ENCODE measurements at regions of chr3 and their contacts with region 1.

Region 1: GRCh38 chr3:186882881-186883685 is 40.6 kb downstream of the ADIPOQ start:
- DNase-seq: peak; percentile 80
- H3K4me3 Mint-ChIP-seq: peak overlapping the region; percentile 59
- H3K27ac Mint-ChIP-seq: peak overlapping the region; percentile 90
- H3K4me1 Mint-ChIP-seq: peaks cover 63% of the 10 kb centered on the region
- H3K27me3 Mint-ChIP-seq: no peaks in the 10 kb centered on the region

Region 2: GRCh38 chr3:186570096-186570940 is 312.8 kb before region 1 on chr3 and contains the start of gene DNAJB11:
- CTCF ChIA-PET with region 1: no interaction called
- POLR2A ChIA-PET with region 1: no interaction called
- intact Hi-C with region 1: no loop called
- DNase-seq: peak; percentile 100
- H3K4me3 Mint-ChIP-seq: peak within 1 kb of the TSS; percentile 95
- H3K27ac Mint-ChIP-seq: peak within 1 kb of the TSS; percentile 91
- H3K4me1 Mint-ChIP-seq: peaks cover 49% of the 10 kb centered on the region
- H3K27me3 Mint-ChIP-seq: no peaks in the 10 kb centered on the region
- total RNA-seq, gene DNAJB11: 36.9 to 39.5 TPM

Region 3: DNA sequence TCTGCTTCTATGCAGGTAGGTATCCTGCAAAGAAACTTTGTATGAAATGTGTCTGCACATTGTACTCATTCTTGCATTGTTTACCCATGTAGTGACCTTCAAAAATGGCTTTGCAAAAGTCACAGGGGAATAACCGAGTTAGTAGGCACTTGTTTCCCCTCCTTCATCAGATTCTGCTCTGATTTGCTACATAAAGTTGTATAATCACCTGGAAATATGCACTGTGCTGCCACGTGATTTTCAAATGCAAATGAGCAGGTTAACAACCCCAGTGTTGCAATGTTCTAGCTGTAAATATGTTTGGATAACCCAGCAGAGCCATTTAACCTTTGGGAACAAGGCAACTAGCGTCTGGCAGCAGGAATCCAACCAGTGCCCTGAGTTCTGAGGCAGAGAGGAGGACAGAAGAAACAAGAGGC is 166.0 kb before region 1 on chr3 and contains the start of gene KNG1:
- CTCF ChIA-PET with region 1: no interaction called
- POLR2A ChIA-PET with region 1: no interaction called
- intact Hi-C with region 1: no loop called
- DNase-seq: no peak
- H3K4me3 Mint-ChIP-seq: no peak within 1 kb of the TSS
- H3K27ac Mint-ChIP-seq: no peak within 1 kb of the TSS
- H3K4me1 Mint-ChIP-seq: no peaks in the 10 kb centered on the region
- H3K27me3 Mint-ChIP-seq: peaks cover 3% of the 10 kb centered on the region
- total RNA-seq, gene KNG1: not detected

Region 4: DNA sequence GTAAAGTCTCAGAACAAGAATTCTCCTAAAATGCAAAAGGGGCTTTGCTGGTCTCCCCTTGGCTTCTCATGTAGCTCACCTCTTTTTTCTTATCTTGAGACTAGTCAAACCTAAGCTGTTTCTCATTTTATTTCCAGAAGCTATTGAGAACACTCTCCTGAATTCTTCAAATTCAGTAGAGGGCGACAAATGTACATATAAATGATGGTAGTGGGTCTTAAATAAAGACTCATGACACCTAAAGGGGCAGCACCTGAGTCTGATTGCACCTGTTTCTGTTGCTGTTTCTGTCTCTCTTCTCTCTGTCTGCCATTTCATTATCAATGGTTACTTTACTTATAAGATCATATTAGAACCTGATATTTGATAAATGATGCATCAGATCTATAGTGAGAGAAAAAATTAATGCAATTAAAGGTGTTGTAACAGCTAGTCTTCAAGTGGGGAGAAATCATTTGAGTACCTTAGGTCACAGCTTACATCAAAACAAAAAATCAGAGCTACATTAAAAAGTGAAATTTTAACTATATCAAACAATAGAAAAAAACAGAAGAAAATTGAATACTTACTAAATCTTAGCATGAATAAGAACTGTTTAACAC is 33.6 kb before region 1 on chr3:
- CTCF ChIA-PET with region 1: interaction called, 11 read pairs
- POLR2A ChIA-PET with region 1: interaction called, 4 read pairs
- intact Hi-C with region 1: loop called (anchors 1 kb)
- DNase-seq: peak; percentile 25
- H3K4me3 Mint-ChIP-seq: no peak overlapping the region
- H3K27ac Mint-ChIP-seq: no peak overlapping the region
- H3K4me1 Mint-ChIP-seq: peaks cover 18% of the 10 kb centered on the region
- H3K27me3 Mint-ChIP-seq: peaks cover 4% of the 10 kb centered on the region

Region 5: DNA sequence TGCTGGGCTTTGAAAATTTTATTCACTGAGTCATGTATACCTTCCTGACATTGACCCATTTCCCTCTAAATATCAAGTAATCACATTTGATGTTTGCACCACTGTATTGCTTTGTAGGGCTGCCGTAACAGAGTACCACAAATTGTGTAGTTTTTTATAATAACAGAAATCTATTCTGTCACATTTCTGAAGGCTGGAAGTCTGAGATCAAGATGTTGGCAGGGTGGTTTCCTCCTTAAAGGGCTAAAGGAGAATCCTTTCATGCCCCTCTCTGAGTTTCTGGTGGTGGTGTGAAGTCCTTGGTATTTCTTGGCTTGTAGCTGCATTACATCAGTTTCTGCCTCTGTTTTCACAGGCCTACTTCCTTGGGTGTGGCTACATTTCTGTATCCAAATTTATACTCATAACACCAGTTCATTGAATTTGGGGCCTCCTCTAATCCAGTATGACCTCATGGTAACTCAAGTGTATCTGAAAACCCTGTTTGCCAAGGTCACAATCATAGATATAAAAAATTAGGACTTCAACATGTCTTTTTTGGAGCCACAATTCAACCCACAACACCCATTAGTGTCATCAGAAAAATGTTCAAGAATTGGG is 18.2 kb after region 1 on chr3:
- CTCF ChIA-PET with region 1: no interaction called
- POLR2A ChIA-PET with region 1: no interaction called
- intact Hi-C with region 1: loop called (anchors 2 kb)
- DNase-seq: no peak
- H3K4me3 Mint-ChIP-seq: no peak overlapping the region
- H3K27ac Mint-ChIP-seq: peak overlapping the region; percentile 47
- H3K4me1 Mint-ChIP-seq: peaks cover 18% of the 10 kb centered on the region
- H3K27me3 Mint-ChIP-seq: no peaks in the 10 kb centered on the region

Region 6: GRCh38 chr3:186953011-186953487 is 70.0 kb after region 1 on chr3:
- CTCF ChIA-PET with region 1: no interaction called
- POLR2A ChIA-PET with region 1: interaction called, 6 read pairs
- intact Hi-C with region 1: loop called (anchors 1 kb)
- DNase-seq: peak; percentile 37
- H3K4me3 Mint-ChIP-seq: peak overlapping the region; percentile 21
- H3K27ac Mint-ChIP-seq: peak overlapping the region; percentile 86
- H3K4me1 Mint-ChIP-seq: peaks cover 91% of the 10 kb centered on the region
- H3K27me3 Mint-ChIP-seq: no peaks in the 10 kb centered on the region

Region 7: GRCh38 chr3:187025656-187026316 is 142.7 kb after region 1 on chr3:
- CTCF ChIA-PET with region 1: no interaction called
- POLR2A ChIA-PET with region 1: interaction called, 7 read pairs
- intact Hi-C with region 1: loop called (anchors 1 kb)
- DNase-seq: peak; percentile 59
- H3K4me3 Mint-ChIP-seq: peak overlapping the region; percentile 84
- H3K27ac Mint-ChIP-seq: peak overlapping the region; percentile 96
- H3K4me1 Mint-ChIP-seq: peaks cover 46% of the 10 kb centered on the region
- H3K27me3 Mint-ChIP-seq: no peaks in the 10 kb centered on the region

Region 8: DNA sequence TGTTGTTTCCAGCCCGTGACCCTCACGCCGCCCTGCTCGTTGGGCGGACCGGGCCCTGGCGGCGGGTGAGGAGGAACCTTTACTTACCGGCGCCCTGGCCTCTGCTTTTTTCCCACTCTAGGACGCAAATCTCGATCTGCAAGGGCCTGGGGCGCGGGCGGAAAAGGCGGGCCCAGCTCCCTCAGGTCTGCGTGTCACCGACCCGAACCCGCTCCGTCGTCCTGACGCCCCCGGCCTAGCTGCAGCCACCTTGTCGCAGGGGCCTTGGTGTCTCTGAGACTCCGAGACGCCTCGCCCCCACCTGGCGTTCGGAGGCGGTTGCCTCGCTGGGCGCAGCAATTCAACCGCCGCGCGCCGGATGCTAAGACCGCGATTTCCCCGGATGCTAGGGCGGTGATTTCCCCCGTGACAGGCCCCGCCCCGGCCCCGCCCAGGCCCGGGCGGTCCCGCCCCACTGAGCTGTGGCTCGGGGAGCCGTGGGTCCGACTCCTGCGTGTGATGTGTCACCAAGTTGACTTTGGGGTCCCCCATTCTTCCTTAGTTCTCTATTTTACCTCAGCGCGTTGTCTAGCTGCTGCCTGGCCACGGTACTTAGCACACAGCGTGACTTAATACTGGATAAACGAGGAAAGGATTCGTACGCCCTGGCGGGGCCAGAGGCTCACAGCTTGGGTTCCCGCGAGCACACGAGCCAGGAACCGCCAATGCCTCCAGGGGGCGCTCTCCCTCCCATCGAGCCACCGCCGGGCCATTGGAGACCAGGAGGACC is 256.2 kb after region 1 on chr3 and contains the start of gene RPL39L:
- CTCF ChIA-PET with region 1: interaction called, 8 read pairs
- POLR2A ChIA-PET with region 1: interaction called, 3 read pairs
- intact Hi-C with region 1: loop called (anchors 1 kb)
- DNase-seq: peak; percentile 96
- H3K4me3 Mint-ChIP-seq: peak within 1 kb of the TSS; percentile 91
- H3K27ac Mint-ChIP-seq: peak within 1 kb of the TSS; percentile 93
- H3K4me1 Mint-ChIP-seq: peaks cover 22% of the 10 kb centered on the region
- H3K27me3 Mint-ChIP-seq: no peaks in the 10 kb centered on the region
- total RNA-seq, gene RPL39L: 22.5 to 25.2 TPM

Measured in activated CD4-positive, alpha-beta memory T cell treated with anti-CD3 and anti-CD28 coated beads for 36 hours (primary cell).